ENCODE measurements at regions of chr19 and their contacts with region 1.

Region 1: DNA sequence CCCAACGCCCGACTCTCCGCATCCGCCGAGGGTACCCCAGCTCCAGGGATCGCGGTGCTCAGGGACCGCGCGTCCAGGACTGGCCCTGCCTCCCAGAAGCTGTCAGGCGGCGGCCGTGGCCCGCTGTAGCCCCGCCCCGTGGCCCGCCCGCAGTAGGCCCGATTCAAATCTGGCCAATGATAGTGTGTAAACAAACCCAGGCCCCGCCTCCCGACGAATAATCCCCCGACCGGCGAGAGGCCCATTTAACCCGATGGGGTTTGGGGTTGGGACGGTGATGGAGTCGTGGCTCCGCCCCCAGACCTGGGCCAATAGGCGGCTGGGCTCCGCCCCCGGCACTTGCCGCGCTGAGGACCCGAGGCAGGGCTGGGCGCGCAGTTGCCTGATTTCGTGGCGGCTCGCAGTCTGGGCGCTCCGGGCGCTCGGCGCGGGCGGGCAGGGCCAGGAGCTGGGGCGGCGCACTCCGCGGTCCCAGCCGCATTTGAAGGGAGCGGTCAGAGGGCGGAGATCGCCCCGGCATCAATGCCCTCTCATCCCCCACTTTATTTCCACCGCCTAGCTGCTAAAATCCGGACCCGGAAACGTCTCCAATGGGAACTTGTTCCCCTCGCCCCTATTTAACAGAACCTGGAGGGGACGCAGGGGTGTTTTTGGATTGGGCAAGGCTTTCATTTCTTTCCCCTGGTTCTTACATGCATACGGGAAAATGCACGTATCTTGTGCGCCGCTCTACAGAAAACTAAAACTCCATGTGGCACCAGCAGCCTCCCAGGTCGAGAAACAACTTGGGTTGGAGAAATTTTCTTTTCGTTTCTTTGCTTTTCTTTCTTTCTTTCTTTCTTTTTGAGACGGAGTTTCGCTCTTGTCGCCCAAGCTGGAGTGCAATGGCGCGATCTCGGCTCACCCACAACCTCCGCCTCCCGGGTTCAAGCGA is 8.4 kb upstream of the BICRA start:
- DNase-seq: peak; percentile 100
- H3K4me3 ChIP-seq: peak overlapping the region; percentile 8 to 42 (median 38)
- H3K27ac ChIP-seq: peak overlapping the region; percentile 68 to 75 (median 69)
- H3K4me1 ChIP-seq: peaks cover 0 to 4% of the 10 kb centered on the region in 2 donors
- H3K27me3 ChIP-seq: no peaks in the 10 kb centered on the region
- CTCF ChIP-seq: peak in 1 of 6 experiments; percentile 20
- POLR2A ChIP-seq: peak; percentile 59 to 95

Region 2: DNA sequence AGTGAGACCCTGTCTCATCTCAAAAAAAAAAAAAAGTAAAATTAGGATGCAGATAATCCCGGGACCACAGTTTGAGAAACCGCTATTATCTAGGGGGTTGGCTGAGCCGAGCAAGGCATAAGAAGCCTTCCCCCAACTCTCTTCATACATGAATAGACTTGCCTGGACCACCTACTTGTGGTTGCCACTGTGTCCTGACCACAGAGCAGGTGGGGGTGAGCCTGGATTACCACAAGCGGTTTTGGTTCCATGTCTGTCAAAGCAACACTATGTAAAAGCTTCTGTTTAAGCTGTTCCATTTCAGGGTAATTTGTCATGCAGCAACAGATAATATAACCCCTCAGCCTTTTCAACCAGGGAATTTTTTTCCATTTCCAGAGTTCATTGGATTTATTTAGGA is 82.4 kb before region 1 on chr19:
- intact Hi-C with region 1: no loop called
- DNase-seq: no peak
- H3K4me3 ChIP-seq: no peak overlapping the region
- H3K27ac ChIP-seq: no peak overlapping the region
- H3K4me1 ChIP-seq: peaks cover 16 to 20% of the 10 kb centered on the region in 2 donors
- H3K27me3 ChIP-seq: no peaks in the 10 kb centered on the region
- CTCF ChIP-seq: no peak
- POLR2A ChIP-seq: no peak

Region 3: GRCh38 chr19:47697863-47698609 is 97.5 kb after region 1 on chr19:
- intact Hi-C with region 1: loop called (anchors 5 kb)
- DNase-seq: peak; percentile 60 to 65
- H3K4me3 ChIP-seq: no peak overlapping the region
- H3K27ac ChIP-seq: peak overlapping the region in 2 of 3 donors; percentile 24 to 33
- H3K4me1 ChIP-seq: no peaks in the 10 kb centered on the region
- H3K27me3 ChIP-seq: no peaks in the 10 kb centered on the region
- CTCF ChIP-seq: peak; percentile 93 to 98 (median 96)
- POLR2A ChIP-seq: no peak

Measured in thyroid gland (tissue), 4 donors.